ENCODE measurements at regions of chr21 and their contacts with region 1.

Region 1: DNA sequence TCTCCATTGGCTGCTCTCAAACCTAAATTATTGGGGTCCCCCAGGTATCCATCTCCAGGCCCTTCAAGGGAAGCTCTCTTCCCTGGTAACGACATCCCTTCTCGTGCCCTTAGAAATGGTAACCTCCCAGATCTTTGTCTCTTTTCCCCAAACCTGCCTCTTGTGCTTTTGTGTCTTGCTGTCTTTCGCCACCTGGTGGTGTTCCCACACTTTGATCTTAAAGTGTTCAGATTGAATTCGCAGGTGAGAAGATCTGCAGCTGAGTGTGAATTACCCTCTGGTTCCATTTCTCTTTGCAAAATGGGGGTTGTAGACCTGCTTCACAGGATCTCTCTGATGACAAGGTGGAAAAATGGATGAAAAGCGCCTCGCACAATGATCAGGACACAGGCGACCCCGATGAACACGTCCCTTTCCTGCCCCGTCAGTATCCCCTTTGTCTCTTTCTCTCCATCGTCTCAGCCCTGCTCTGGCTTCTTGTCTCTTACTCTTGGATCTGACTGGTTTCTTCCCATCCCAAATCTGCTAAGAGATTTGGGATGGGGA is 53.1 kb downstream of the DOP1B start:
- DNase-seq: peak; percentile 73
- ATAC-seq: peak; percentile 78
- H3K4me3 ChIP-seq: peak overlapping the region; percentile 18 to 39
- H3K27ac ChIP-seq: peak overlapping the region; percentile 48
- H3K4me1 ChIP-seq: peaks cover 23 to 47% of the 10 kb centered on the region in 2 experiments
- H3K27me3 ChIP-seq: no peaks in the 10 kb centered on the region
- CTCF ChIP-seq: peak in 2 of 3 experiments; percentile 60 to 82; a peak in 4 of 6 replicates
- POLR2A ChIP-seq: no peak
- RAD21 ChIP-seq: no peak

Region 2: GRCh38 chr21:35448876-35449599 is 760.7 kb before region 1 on chr21:
- CTCF ChIA-PET with region 1: no interaction called
- POLR2A ChIA-PET with region 1: no interaction called
- RAD21 ChIA-PET with region 1: no interaction called
- intact Hi-C with region 1: no loop called
- DNase-seq: no peak
- ATAC-seq: no peak
- H3K4me3 ChIP-seq: no peak overlapping the region
- H3K27ac ChIP-seq: no peak overlapping the region
- H3K4me1 ChIP-seq: no peaks in the 10 kb centered on the region
- H3K27me3 ChIP-seq: no peaks in the 10 kb centered on the region
- CTCF ChIP-seq: no peak
- POLR2A ChIP-seq: no peak
- RAD21 ChIP-seq: no peak

Region 3: DNA sequence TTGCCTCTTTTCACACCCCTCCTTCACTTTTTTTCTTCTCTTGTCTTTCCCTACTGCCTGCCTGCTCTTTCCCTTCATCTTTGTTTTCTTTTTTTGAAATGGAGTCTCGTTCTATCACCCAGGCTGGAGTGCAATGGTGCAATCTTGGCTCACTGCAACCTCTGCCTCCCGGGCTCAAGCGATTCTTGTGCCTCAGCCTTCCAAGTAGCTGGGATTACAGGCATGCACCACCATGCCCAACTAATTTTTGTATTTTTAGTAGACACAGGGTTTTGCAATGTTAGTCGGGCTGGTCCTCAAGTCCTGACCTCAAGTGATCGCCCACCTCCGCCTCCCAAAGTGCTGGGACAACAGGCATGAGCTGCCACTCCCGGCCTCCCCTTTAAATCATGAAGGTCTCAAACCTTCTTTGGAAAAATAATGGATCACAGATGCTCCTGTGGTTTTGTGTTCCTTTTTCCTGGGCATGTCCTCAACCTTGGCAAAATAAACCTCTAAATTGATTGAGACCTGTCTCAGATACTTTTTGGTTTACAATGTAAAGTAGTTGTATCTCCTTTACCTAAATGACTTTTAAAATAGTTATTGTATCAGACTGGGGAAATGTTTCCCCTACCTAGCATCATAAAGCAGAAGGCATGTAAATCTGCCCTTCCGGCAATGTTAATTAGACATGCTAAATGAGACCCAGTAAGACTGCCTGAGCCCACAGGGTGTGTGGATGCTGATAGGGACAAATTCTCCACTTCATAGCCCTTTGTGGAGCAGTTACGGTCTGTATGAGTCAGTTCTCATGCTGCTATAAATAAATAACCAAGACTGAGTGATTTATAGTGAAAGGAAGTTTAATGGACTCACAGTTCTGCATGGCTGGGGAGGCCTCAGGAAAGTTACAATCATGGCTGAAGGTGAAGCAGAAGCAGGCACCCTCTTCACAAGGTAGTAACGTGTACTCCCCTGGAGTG is 112.2 kb before region 1 on chr21:
- CTCF ChIA-PET with region 1: no interaction called
- POLR2A ChIA-PET with region 1: no interaction called
- RAD21 ChIA-PET with region 1: no interaction called
- intact Hi-C with region 1: no loop called
- DNase-seq: no peak
- ATAC-seq: no peak
- H3K4me3 ChIP-seq: no peak overlapping the region
- H3K27ac ChIP-seq: no peak overlapping the region
- H3K4me1 ChIP-seq: peaks cover 0 to 5% of the 10 kb centered on the region in 2 experiments; a peak in 1 of 4 replicates
- H3K27me3 ChIP-seq: no peaks in the 10 kb centered on the region
- CTCF ChIP-seq: no peak
- POLR2A ChIP-seq: no peak
- RAD21 ChIP-seq: no peak

Region 4: DNA sequence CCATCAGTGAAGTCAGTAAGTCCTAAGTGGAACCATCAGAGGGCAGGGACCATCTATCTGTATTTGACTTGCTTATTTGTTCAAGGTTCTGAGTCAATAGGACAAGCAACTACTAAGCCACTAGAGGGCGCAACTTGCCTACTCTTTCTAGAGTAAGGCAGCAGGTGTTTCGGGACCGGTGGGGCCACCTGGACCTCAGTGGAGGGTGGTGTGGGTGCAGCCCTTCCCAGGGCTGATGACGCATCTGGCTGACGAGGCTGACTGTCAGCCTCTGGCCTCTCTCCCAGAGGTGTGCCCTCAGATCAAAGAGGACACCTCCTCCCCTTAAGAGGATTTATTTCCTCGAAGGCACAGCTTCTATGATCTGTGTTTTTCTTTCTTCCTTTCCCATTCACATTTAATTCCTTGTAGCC is 68.2 kb before region 1 on chr21:
- CTCF ChIA-PET with region 1: interaction called, 19 read pairs
- POLR2A ChIA-PET with region 1: interaction called, 3 read pairs
- RAD21 ChIA-PET with region 1: no interaction called
- intact Hi-C with region 1: loop called (anchors 1 kb)
- DNase-seq: peak; percentile 98
- ATAC-seq: peak; percentile 99
- H3K4me3 ChIP-seq: peak overlapping the region in 1 of 2 experiments; percentile 28; a peak in 3 of 4 replicates
- H3K27ac ChIP-seq: peak overlapping the region; percentile 52
- H3K4me1 ChIP-seq: peaks cover 13 to 26% of the 10 kb centered on the region in 2 experiments
- H3K27me3 ChIP-seq: no peaks in the 10 kb centered on the region
- CTCF ChIP-seq: peak; percentile 75 to 94 (median 89)
- POLR2A ChIP-seq: no peak
- RAD21 ChIP-seq: peak; percentile 95

Region 5: GRCh38 chr21:36156339-36156814 is 53.3 kb before region 1 on chr21:
- CTCF ChIA-PET with region 1: interaction called, 24 read pairs
- POLR2A ChIA-PET with region 1: interaction called, 8 read pairs
- RAD21 ChIA-PET with region 1: interaction called in 1 of 2 experiments, 3 read pairs
- intact Hi-C with region 1: loop called (anchors 1 kb)
- DNase-seq: peak; percentile 97
- ATAC-seq: peak; percentile 87
- H3K4me3 ChIP-seq: peak overlapping the region; percentile 68 to 72
- H3K27ac ChIP-seq: peak overlapping the region; percentile 81; the same call in 1 of the 2 replicates
- H3K4me1 ChIP-seq: peaks cover 13 to 25% of the 10 kb centered on the region in 2 experiments
- H3K27me3 ChIP-seq: no peaks in the 10 kb centered on the region
- CTCF ChIP-seq: no peak
- POLR2A ChIP-seq: no peak
- RAD21 ChIP-seq: no peak